ENCODE measurements at regions of chr4 and their contacts with region 1.

Region 1: GRCh38 chr4:7067452-7068278 is at the start of gene GRPEL1:
- DNase-seq: peak; percentile 98
- CTCF ChIP-seq: no peak

Region 2: DNA sequence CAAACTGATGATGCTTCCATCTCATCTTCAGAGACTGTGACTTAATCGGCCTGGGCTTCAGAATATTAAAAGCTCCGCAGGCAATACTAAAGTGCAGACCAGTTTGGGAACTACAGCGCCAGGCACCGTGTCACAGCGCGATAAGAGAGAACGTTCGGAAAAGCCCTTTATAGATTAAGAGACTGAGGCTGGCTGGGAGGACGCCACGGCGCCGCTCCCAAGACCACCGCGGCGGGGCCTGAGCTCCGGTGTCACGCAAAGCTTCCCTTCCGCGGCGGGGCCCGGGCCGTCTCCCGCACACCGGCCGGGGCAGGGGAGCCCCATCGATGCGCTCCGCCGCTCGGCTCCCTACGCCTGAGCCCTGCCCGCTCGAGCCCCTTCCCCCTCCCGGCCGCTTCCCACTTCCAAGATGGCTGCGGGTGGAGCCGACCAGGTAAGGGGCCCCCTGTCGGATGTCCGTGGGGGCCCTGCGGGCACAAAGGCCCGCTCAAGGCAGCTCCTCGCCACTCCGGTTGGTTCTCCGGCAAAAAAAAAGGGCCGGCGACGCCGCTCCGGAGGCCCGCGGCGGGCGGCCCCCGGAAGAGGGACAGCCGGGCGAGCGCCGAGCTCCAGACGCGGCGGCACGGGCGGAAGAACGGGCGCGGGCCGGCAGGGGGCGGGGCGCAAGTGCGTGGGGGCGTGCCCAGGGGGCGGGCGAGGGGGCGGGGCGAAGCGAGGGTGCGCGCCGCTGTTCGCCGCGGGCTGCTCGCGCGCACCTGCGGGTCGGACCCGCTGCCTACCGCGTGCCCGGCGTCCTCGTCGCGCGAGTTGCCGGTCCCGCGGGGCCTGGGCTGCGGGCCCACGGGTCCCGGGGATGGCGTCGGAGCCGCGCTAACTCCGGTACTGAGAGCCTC is 158.3 kb before region 1 on chr4 and contains the start of gene TBC1D14:
- CTCF ChIA-PET with region 1: interaction called, 28 read pairs
- POLR2A ChIA-PET with region 1: no interaction called
- DNase-seq: peak; percentile 96
- CTCF ChIP-seq: no peak

Region 3: DNA sequence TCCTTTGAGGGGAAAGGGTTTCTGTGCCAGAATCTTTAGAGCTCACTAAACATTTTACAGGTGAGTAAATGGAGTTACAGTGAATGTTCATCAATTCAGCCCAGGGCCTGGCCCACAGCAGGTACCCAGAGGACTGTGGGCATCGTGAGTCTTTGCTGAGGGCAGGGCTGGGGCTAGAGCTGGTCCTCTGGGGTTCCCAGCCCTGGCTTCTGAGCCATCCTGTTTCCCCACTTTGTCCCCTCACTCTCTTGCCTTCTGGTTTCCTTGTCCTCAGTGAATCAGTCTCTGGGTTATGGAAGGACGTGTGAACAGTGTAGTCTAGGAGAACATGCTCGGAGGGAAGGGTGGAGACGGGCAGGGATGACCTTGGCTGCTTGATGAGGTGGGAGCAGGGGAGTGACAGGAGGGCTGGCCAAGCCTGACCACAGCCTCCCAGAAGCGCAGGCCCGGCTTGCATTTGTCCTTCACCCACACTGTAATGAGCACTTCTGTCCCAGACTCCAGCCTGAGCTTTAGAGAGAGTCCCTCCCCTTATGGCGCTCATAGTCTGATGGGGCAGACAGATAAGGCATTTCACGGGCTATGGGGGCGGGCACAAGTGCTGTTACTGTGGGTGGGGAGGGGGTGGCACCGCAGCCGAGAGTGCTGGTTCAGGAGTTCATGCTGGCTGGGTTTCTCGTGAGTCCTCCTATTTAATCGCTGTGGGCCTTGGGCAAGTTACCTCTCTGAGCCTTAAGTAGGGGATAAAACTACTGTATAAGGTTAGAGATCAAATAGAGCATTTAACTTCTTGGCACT is 140.8 kb before region 1 on chr4:
- CTCF ChIA-PET with region 1: no interaction called
- POLR2A ChIA-PET with region 1: no interaction called
- DNase-seq: no peak
- CTCF ChIP-seq: no peak

Region 4: GRCh38 chr4:6986781-6987587 is 80.7 kb before region 1 on chr4:
- CTCF ChIA-PET with region 1: interaction called, 16 read pairs
- POLR2A ChIA-PET with region 1: no interaction called
- DNase-seq: peak; percentile 99
- CTCF ChIP-seq: no peak

Region 5: GRCh38 chr4:7052923-7053715 is 14.5 kb before region 1 on chr4:
- CTCF ChIA-PET with region 1: interaction called, 51 read pairs
- POLR2A ChIA-PET with region 1: interaction called, 8 read pairs
- DNase-seq: no peak
- CTCF ChIP-seq: no peak

Region 6: DNA sequence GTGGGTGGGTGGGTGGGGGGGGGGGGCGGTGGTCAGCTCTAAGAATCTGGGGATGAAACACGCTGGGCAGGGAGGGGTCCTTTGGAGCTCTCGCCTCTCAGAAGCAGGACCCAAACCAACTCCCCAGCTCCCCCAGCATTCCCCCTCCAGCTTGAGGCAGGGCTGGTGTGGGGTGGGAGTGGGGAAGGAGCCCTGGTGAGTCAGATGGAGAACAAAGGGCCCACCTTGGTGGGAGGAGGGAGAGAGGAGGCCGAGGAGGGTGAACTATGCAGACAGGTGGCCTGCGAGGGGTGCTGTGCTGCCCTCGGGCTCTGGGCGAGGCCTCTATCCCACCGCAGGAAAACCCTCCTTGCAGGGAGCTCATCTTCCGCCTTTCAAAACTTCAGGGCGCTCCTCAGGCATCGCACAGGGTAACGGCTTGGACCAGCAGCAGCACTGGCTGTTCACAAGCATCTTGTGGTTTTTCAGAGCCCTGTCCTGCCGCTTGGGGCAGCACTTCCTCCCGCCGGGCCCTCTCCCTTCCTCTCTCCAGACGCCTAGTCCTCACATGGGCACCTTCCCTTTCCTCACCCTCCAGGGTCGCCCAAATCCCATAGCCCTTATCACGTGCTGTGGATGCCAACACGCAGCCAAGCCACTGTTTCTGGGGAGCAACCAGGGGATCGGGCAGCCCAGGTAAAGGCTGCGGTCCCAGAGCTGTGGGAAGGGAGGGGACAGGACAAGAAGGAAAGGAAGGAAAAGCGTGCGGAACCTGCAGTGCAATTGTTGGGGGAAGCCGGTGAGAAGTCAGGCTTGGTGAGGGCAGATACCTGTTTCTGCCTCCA is 34.2 kb after region 1 on chr4:
- CTCF ChIA-PET with region 1: interaction called, 17 read pairs
- POLR2A ChIA-PET with region 1: no interaction called
- DNase-seq: peak; percentile 79
- CTCF ChIP-seq: peak; percentile 63

Region 7: GRCh38 chr4:7365462-7366179 is 298.0 kb after region 1 on chr4:
- CTCF ChIA-PET with region 1: no interaction called
- POLR2A ChIA-PET with region 1: no interaction called
- DNase-seq: no peak
- CTCF ChIP-seq: no peak

Measured in GM10248 (cell line).